OCI-LY7 (cell line): ENCODE measurements at regions of chr12 and their contacts with region 1.

Region 1: DNA sequence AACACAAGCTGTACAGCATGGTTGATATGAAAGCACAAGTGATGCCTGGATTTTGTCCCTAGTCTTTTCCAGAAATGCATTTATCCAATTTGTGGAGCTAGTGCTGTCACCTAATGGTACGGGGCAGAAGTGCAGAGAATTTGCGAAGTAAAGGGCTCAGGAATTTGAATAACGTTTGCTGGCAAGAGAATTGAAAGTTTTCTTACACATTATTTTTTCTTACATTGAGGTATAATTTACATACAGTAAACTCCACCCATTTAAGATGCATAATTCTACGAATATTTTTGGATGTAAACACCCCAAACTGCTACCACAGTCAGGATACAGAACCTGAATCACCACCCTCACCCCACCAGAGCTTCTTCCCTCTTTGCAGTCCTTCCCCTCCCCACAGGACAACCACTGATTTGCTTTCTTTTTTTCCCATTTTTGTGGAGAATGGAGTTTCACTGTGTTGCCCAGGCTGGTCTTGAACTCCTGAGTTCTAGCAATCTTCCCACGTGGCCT is 3.5 kb downstream of the AICDA start:
- DNase-seq: peak; percentile 67
- H3K4me3 ChIP-seq: peak overlapping the region; percentile 72
- H3K27ac ChIP-seq: peak overlapping the region; percentile 81
- H3K4me1 ChIP-seq: peaks cover 45% of the 10 kb centered on the region
- CTCF ChIP-seq: peak; percentile 99

Region 2: GRCh38 chr12:8544295-8544694 is 64.8 kb before region 1 on chr12:
- CTCF ChIA-PET with region 1: interaction called, 13 read pairs
- POLR2A ChIA-PET with region 1: interaction called, 20 read pairs
- intact Hi-C with region 1: loop called (anchors 1 kb)
- DNase-seq: peak; percentile 87
- H3K4me3 ChIP-seq: peak overlapping the region; percentile 43
- H3K27ac ChIP-seq: no peak overlapping the region
- H3K4me1 ChIP-seq: peaks cover 18% of the 10 kb centered on the region
- CTCF ChIP-seq: peak; percentile 98

Region 3: GRCh38 chr12:8577879-8578278 is 31.2 kb before region 1 on chr12:
- CTCF ChIA-PET with region 1: interaction called, 3 read pairs
- POLR2A ChIA-PET with region 1: interaction called, 67 read pairs
- intact Hi-C with region 1: loop called (anchors 2 kb)
- DNase-seq: peak; percentile 49
- H3K4me3 ChIP-seq: peak overlapping the region; percentile 28
- H3K27ac ChIP-seq: peak overlapping the region; percentile 75
- H3K4me1 ChIP-seq: peaks cover 37% of the 10 kb centered on the region
- CTCF ChIP-seq: peak; percentile 70

Region 4: GRCh38 chr12:8622646-8623045 is 13.5 kb after region 1 on chr12:
- CTCF ChIA-PET with region 1: interaction called, 3 read pairs
- POLR2A ChIA-PET with region 1: interaction called, 58 read pairs
- intact Hi-C with region 1: no loop called
- DNase-seq: no peak
- H3K4me3 ChIP-seq: no peak overlapping the region
- H3K27ac ChIP-seq: no peak overlapping the region
- H3K4me1 ChIP-seq: peaks cover 7% of the 10 kb centered on the region
- CTCF ChIP-seq: no peak

Region 5: GRCh38 chr12:8638961-8639755 is 30.0 kb after region 1 on chr12:
- CTCF ChIA-PET with region 1: interaction called, 5 read pairs
- POLR2A ChIA-PET with region 1: interaction called, 72 read pairs
- intact Hi-C with region 1: loop called (anchors 1 kb)
- DNase-seq: no peak
- H3K4me3 ChIP-seq: no peak overlapping the region
- H3K27ac ChIP-seq: no peak overlapping the region
- H3K4me1 ChIP-seq: peaks cover 54% of the 10 kb centered on the region
- CTCF ChIP-seq: no peak

Region 6: DNA sequence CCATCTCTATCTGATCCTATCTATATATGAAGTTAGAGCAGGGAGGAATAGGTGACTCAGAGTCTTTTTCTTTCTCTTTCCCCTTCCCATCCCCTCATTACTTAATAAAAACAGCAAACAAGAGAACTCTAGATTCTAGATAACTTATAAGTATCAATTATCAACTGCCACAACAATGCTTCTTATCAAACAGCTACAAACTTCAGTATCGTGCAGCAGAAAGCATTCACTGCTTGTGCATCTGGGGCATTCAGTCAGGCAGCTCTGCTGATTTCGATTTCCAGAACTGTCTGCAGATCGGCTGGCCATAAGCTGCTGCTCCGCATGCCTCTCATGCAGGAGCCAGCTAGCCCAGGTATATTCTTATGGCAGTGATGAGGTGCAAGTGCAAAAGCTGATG is 232.7 kb after region 1 on chr12:
- CTCF ChIA-PET with region 1: no interaction called
- POLR2A ChIA-PET with region 1: no interaction called
- intact Hi-C with region 1: no loop called
- DNase-seq: no peak
- H3K4me3 ChIP-seq: no peak overlapping the region
- H3K27ac ChIP-seq: no peak overlapping the region
- H3K4me1 ChIP-seq: no peaks in the 10 kb centered on the region
- CTCF ChIP-seq: no peak